Activated CD4-positive, alpha-beta T cell treated with anti-CD3 and anti-CD28 coated beads for 36 hours (primary cell): ENCODE measurements at regions of chr3 and their contacts with region 1.

Region 1: DNA sequence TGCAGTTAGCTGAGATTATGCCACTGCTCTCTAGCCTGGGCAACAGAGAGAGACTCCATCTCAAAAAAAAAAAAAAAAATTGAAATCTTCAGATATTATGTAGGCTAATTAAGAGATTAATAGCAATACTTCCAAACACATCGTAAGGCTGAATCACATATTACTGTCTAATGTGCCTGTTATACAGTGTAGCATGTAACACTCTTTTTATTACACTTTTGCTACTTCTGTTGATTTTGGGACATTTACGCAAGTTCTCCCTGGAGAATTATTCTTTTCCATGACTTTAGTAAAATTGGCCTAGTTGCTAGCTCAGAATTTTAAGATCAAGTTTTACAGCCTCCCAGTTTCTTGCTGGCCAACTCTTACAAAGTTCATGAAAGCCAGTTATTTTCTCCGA is 605.2 kb downstream of the NAALADL2 start:
- DNase-seq: no peak
- ATAC-seq: no peak
- H3K4me3 Mint-ChIP-seq: no peak overlapping the region
- H3K27ac Mint-ChIP-seq: no peak overlapping the region
- H3K4me1 Mint-ChIP-seq: no peaks in the 10 kb centered on the region
- H3K27me3 Mint-ChIP-seq: no peaks in the 10 kb centered on the region

Region 2: DNA sequence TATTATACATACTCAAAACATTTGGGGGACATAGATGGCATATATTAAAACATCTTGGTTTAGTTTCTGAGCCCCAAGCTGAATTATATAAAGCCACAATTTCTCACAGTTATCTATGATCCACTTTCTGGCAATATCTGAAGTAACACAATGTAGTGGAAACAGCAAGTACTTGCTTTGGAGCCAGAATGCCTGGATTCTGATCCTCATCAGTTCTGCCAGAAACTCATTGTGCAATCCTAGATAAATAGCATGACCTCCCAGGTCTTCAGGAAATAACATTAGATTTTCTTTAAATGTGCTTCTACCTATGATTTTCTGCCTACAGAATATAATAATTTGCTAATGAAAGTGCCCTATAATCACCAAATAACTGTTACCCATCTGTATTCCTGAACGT is 60.3 kb before region 1 on chr3:
- CTCF ChIA-PET with region 1: no interaction called
- POLR2A ChIA-PET with region 1: no interaction called
- intact Hi-C with region 1: loop called in 1 of 2 experiments (anchors 10 kb)
- DNase-seq: no peak
- ATAC-seq: no peak
- H3K4me3 Mint-ChIP-seq: no peak overlapping the region
- H3K27ac Mint-ChIP-seq: no peak overlapping the region
- H3K4me1 Mint-ChIP-seq: no peaks in the 10 kb centered on the region
- H3K27me3 Mint-ChIP-seq: no peaks in the 10 kb centered on the region

Region 3: DNA sequence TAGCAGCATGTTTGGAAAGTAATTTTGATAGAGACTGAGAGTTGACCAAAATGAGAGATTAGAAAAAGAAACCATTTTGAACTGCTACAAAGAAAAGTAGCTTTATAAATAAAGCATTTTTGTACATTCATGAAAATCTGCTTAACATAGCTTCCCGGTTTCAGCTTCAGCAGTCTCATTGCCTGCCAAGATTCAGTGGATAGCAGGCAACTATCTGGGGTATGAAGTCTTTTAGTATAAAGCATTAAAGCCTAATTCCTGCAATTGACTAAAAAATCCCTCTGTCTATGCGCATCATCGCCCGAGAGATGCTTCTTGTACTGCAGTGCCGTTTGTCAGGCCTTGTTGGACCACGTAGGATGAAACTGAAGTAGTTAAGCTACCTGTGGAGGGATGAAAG is 16.8 kb before region 1 on chr3:
- CTCF ChIA-PET with region 1: no interaction called
- POLR2A ChIA-PET with region 1: no interaction called
- intact Hi-C with region 1: no loop called
- DNase-seq: no peak
- ATAC-seq: no peak
- H3K4me3 Mint-ChIP-seq: no peak overlapping the region
- H3K27ac Mint-ChIP-seq: no peak overlapping the region
- H3K4me1 Mint-ChIP-seq: no peaks in the 10 kb centered on the region
- H3K27me3 Mint-ChIP-seq: no peaks in the 10 kb centered on the region